Heart right ventricle (tissue), 16 donors: ENCODE measurements at regions of chr9 and their contacts with region 1.

Region 1: DNA sequence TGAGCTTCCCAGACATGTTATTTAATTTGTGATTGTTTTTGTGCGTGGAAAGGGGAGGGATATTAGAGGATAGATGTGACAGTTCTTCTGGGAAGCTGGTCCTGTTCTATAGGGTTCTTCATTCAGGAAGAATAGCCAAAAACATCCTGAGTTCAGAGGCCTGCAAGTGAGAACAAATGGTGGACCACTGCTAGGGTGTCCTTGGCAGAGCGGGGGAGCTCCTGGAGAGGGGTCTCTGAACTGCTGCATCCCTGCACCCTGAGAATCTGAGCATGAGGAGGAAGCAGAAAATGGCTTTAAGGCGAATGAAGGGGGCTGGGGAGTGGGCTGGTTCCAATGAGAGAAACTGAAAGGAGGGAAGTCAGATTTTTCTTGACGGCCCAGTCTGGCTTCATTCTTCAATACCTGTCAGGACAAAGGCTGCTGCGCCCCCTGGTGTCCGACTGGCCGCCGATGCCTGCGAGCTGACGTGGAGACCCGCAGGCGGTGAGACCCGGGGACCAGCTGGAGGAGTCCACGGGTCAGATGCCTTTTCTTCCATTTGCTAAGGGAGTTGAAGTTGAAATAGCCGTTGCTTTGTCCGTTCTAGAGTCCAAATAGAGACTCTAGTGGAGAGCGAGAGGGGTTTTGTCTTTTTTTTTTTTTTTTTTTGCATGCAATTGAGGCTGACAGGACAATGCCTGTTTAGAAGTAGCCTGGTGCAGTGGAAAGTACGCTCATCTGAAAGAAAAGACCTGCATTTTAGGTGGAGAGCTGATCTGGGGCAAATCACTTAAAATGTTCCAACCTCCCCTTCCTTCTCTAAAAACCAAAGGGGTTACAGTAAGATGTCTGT is 39.5 kb upstream of the NFIB start:
- DNase-seq: peak; percentile 96 to 97
- ATAC-seq: peak; percentile 58 to 82 (median 76)
- H3K4me3 ChIP-seq: peak overlapping the region in 5 of 10 donors; percentile 25 to 44 (median 31)
- H3K27ac ChIP-seq: peak overlapping the region in 9 of 10 donors; percentile 26 to 98 (median 92)
- H3K4me1 ChIP-seq: peaks cover 0 to 75% (median 49%) of the 10 kb centered on the region in 9 donors
- H3K27me3 ChIP-seq: peaks cover 0 to 31% (median 0%) of the 10 kb centered on the region in 7 donors
- CTCF ChIP-seq: peak; percentile 90 to 97 (median 91)

Region 2: GRCh38 chr9:13443346-13444244 is 909.8 kb before region 1 on chr9:
- intact Hi-C with region 1: loop called in 4 of 10 experiments (anchors 5 kb)
- DNase-seq: no peak
- ATAC-seq: peak in 3 of 8 donors; percentile 27 to 57 (median 29)
- H3K4me3 ChIP-seq: peak overlapping the region in 4 of 10 donors; percentile 6 to 27 (median 10)
- H3K27ac ChIP-seq: peak overlapping the region in 5 of 10 donors; percentile 4 to 83 (median 70)
- H3K4me1 ChIP-seq: peaks cover 14 to 59% (median 38%) of the 10 kb centered on the region in 9 donors
- H3K27me3 ChIP-seq: no peaks in the 10 kb centered on the region
- CTCF ChIP-seq: no peak

Region 3: GRCh38 chr9:13688994-13689600 is 664.3 kb before region 1 on chr9:
- intact Hi-C with region 1: loop called in 3 of 10 experiments (anchors 10 kb)
- DNase-seq: peak in 1 of 2 donors; percentile 19
- ATAC-seq: peak in 3 of 8 donors; percentile 33 to 38 (median 34)
- H3K4me3 ChIP-seq: no peak overlapping the region
- H3K27ac ChIP-seq: peak overlapping the region in 4 of 10 donors; percentile 1 to 54 (median 30)
- H3K4me1 ChIP-seq: peaks cover 0 to 33% (median 13%) of the 10 kb centered on the region in 9 donors
- H3K27me3 ChIP-seq: no peaks in the 10 kb centered on the region
- CTCF ChIP-seq: peak; percentile 17 to 72 (median 54)

Region 4: DNA sequence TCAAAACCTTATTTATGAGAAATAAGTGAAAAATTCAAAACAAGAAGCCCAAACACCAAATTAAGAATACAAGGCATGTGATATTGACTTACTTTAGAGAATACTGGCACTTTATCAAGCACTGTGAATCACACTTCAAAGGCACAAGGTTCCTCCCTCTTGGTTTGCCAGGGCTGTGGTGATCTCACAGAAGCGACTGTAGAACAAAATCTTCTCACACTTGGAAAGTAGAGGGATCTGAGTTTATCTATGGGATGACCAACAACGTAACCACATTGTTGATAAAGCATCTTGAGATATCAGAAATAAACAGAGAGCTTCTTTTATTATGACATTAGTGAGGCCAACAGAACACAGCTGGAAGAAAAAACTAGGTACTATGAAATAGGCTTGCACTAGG is 335.4 kb before region 1 on chr9:
- intact Hi-C with region 1: loop called in 1 of 10 experiments (anchors 10 kb)
- DNase-seq: no peak
- ATAC-seq: no peak
- H3K4me3 ChIP-seq: no peak overlapping the region
- H3K27ac ChIP-seq: peak overlapping the region in 2 of 10 donors; percentile 22 to 45
- H3K4me1 ChIP-seq: peaks cover under 1 to 59% (median 8%) of the 10 kb centered on the region in 9 donors
- H3K27me3 ChIP-seq: no peaks in the 10 kb centered on the region
- CTCF ChIP-seq: no peak

Region 5: GRCh38 chr9:14314929-14315645 is 38.4 kb before region 1 on chr9:
- intact Hi-C with region 1: loop called in 7 of 10 experiments (anchors 1 to 5 kb)
- DNase-seq: peak; percentile 94 to 98
- ATAC-seq: peak; percentile 66 to 91 (median 82)
- H3K4me3 ChIP-seq: peak overlapping the region; percentile 55 to 94 (median 76)
- H3K27ac ChIP-seq: peak overlapping the region; percentile 96 to 100 (median 99)
- H3K4me1 ChIP-seq: peaks cover 0 to 55% (median 41%) of the 10 kb centered on the region in 9 donors
- H3K27me3 ChIP-seq: peaks cover 0 to 69% (median 0%) of the 10 kb centered on the region in 7 donors
- CTCF ChIP-seq: no peak